PC-9 (cell line): ENCODE measurements at regions of chr22 and their contacts with region 1.

Region 1: DNA sequence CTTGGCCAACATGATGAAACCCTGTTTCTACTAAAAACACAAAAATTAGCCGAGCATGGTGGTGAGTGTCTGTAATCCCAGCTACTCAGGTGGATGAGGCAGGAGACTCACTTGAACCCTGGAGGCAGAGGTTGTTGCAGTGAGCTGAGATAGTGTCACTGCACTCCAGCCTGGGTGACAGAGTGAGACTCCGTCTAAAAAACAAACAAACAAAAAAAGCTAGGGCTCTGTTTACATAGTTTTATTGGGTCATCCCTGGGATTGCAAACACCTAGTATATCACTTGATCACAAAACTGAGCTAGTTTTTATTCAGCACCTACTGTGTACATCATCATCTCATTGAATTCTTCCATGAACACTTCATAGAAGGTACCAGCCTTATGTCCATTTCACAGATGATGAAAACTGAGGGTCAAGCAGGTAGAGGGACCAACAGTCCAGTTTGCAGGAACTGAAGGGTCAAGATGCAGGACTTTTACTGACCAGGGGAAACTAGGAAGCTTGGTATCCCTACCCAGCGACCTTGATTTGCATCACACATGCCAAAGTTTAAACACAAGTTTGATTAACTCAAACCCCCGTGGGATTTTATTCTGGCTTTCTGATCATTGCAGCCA is 9.2 kb upstream of the MRTFA start:
- DNase-seq: no peak
- H3K4me3 ChIP-seq: no peak overlapping the region
- H3K27ac ChIP-seq: no peak overlapping the region
- H3K4me1 ChIP-seq: peaks cover 13% of the 10 kb centered on the region
- H3K27me3 ChIP-seq: no peaks in the 10 kb centered on the region
- CTCF ChIP-seq: no peak

Region 2: DNA sequence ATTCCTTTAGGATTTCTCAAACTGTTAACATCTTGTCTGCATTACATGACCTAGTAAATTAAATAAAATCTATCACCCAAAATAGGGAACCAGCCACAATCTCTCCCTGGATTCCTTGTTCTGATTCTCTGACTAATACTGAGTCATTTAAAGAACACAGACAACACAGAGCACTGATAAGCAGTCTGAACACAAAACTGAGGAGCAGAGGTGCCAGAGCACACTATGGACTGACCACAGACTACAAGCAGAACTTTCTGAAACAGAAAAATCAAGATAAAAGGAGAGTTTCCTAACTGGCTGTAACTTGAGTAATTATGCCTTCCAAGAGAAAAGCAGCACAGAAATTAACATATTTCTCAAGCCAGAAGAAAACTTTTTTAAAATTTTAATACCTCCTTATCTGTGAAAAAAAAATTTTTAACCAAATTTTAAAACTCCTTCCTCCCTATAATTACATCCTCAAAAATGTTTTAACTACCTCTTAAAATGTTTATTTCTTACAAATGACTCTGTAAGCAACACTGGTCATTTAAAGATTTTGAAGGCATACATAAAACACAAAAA is 146.4 kb before region 1 on chr22:
- CTCF ChIA-PET with region 1: no interaction called
- POLR2A ChIA-PET with region 1: no interaction called
- intact Hi-C with region 1: loop called (anchors 2 kb)
- DNase-seq: peak; percentile 49 to 98
- H3K4me3 ChIP-seq: peak overlapping the region; percentile 31; the same call in 1 of the 2 replicates
- H3K27ac ChIP-seq: peak overlapping the region; percentile 96
- H3K4me1 ChIP-seq: peaks cover 40% of the 10 kb centered on the region
- H3K27me3 ChIP-seq: no peaks in the 10 kb centered on the region
- CTCF ChIP-seq: no peak

Region 3: GRCh38 chr22:40509401-40510134 is 136.1 kb before region 1 on chr22:
- CTCF ChIA-PET with region 1: no interaction called
- POLR2A ChIA-PET with region 1: no interaction called
- intact Hi-C with region 1: no loop called
- DNase-seq: peak; percentile 45 to 87
- H3K4me3 ChIP-seq: peak overlapping the region; percentile 33; the same call in 1 of the 2 replicates
- H3K27ac ChIP-seq: peak overlapping the region; percentile 94
- H3K4me1 ChIP-seq: peaks cover 78% of the 10 kb centered on the region
- H3K27me3 ChIP-seq: no peaks in the 10 kb centered on the region
- CTCF ChIP-seq: no peak

Region 4: DNA sequence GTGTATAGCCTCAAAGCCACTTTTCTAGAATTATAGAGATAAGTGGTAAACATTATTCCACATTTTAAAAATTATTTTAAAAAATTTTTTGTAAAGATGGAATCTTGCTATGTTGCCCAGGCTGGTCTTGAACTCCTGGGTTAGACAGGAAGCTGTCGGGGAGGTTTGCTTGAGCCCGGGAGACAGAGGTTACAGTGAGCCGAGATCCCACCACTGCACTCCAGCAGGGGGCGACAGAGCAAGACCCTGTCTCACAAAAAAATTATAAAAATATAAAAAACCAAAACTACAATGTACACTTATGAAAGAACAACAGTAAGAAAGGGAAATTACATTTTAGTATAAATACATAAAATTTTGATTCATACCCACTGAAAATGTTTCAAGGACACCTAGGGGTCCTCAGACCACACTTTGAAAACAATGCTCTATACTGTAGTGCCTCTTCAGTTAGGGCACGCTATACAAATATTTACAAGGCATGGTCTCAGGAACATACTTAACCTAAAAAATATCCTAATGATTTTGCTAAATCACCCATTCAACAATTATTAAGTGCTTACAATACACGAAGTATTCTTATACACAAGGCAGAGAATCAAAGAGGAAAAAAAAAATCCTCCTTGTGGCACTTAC is 120.3 kb before region 1 on chr22:
- CTCF ChIA-PET with region 1: interaction called, 5 read pairs
- POLR2A ChIA-PET with region 1: no interaction called
- intact Hi-C with region 1: loop called (anchors 1 kb)
- DNase-seq: peak in 1 of 2 experiments; percentile 46
- H3K4me3 ChIP-seq: no peak overlapping the region
- H3K27ac ChIP-seq: peak overlapping the region; percentile 16
- H3K4me1 ChIP-seq: peaks cover 28% of the 10 kb centered on the region
- H3K27me3 ChIP-seq: no peaks in the 10 kb centered on the region
- CTCF ChIP-seq: peak; percentile 86

Region 5: DNA sequence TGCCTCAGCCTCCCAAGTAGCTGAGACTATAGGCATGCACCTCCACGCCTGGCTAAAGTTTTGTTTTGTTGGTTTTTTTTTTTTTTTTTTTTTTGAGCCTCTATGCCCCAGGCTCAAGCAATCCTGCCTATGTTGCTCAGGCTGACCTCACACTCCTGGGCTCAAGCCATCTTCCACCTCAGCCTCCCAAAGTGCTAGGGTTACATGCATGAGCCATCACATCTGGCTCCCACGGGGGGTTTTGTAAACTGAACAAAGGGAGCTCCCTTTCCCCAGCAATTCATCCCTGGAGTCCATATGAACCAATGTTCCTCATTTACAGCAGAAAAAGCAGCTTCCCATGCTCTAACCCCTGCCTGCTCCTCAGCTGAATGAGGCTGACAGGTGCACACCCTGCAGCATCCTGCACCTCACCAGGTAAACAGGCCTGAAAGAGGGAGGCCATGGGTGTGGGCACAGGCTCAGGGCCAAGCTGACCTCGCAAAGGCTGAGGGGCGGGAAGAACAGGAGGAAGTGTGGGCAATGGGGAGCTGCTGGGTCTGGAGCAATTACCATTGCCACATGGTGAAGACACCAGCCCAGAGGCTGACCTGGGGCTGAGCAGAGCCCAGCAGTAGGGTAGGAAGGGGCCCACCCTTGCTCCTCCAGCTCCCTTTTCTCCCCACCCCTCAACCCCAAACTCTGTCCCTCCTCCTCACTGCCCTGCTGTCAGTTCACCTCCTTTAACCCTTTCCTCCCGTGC is 363.7 kb after region 1 on chr22:
- CTCF ChIA-PET with region 1: no interaction called
- POLR2A ChIA-PET with region 1: no interaction called
- intact Hi-C with region 1: no loop called
- DNase-seq: peak; percentile 51 to 77
- H3K4me3 ChIP-seq: no peak overlapping the region
- H3K27ac ChIP-seq: peak overlapping the region; percentile 44
- H3K4me1 ChIP-seq: peaks cover 18% of the 10 kb centered on the region
- H3K27me3 ChIP-seq: no peaks in the 10 kb centered on the region
- CTCF ChIP-seq: no peak